Naive thymus-derived CD4-positive, alpha-beta T cell (primary cell): ENCODE measurements at regions of chr11 and their contacts with region 1.

Region 1: GRCh38 chr11:14300661-14301304 is 58.2 kb downstream of the RRAS2 start:
- DNase-seq: peak in 7 of 9 donors; percentile 19 to 47 (median 26)
- ATAC-seq: peak; percentile 88
- H3K4me3 ChIP-seq: no peak overlapping the region
- H3K4me3 Mint-ChIP-seq: no peak overlapping the region
- H3K27ac ChIP-seq: no peak overlapping the region
- H3K27ac Mint-ChIP-seq: no peak overlapping the region
- H3K4me1 ChIP-seq: no peaks in the 10 kb centered on the region
- H3K4me1 Mint-ChIP-seq: peaks cover 0 to 35% (median 0%) of the 10 kb centered on the region in 7 donors
- H3K27me3 ChIP-seq: no peaks in the 10 kb centered on the region
- H3K27me3 Mint-ChIP-seq: no peaks in the 10 kb centered on the region

Region 2: GRCh38 chr11:14418803-14419417 is 118.1 kb after region 1 on chr11:
- CTCF ChIA-PET with region 1: interaction called, 3 read pairs
- POLR2A ChIA-PET with region 1: no interaction called
- intact Hi-C with region 1: loop called in 1 of 2 experiments (anchors 1 kb)
- DNase-seq: no peak
- ATAC-seq: no peak
- H3K4me3 ChIP-seq: no peak overlapping the region
- H3K4me3 Mint-ChIP-seq: no peak overlapping the region
- H3K27ac ChIP-seq: no peak overlapping the region
- H3K27ac Mint-ChIP-seq: no peak overlapping the region
- H3K4me1 ChIP-seq: peaks cover 12 to 23% of the 10 kb centered on the region in 2 donors
- H3K4me1 Mint-ChIP-seq: peaks cover 12 to 32% (median 19%) of the 10 kb centered on the region in 7 donors
- H3K27me3 ChIP-seq: no peaks in the 10 kb centered on the region
- H3K27me3 Mint-ChIP-seq: no peaks in the 10 kb centered on the region

Region 3: DNA sequence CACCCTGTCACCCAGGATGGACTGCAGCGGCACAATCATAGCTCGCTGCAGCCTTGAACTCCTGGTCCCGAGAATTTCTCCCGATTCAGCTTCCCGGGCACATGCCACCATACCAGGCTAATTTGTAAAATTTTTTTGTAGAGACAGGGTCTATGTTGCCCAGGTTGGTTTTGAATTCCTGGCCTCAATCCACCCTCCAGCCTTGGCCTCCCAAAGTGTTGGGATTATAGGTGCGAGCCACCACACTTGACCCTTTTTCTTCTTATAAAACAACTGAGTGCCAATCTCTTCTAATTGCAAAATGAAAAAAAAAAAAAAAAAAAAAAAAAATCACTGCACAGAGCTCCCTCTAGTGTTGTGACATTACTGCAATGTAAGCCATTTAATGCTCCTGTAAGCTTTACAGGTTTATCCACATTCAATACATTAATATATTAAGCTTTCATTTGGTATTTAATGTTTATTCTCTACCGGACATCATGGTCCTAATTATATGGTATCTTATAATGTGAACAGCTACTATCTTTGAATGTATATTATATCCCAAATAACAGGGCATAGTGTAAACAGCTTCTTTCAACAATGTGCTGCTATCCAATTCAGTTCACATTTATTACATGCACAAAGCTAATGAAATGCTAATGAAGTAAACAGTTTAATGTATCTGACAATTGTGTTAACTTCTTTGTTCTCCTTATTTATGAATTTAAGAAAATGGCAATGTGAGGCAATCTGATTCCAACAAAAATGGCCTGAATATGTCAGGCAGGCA is 154.3 kb after region 1 on chr11:
- CTCF ChIA-PET with region 1: interaction called, 52 read pairs
- POLR2A ChIA-PET with region 1: no interaction called
- intact Hi-C with region 1: loop called (anchors 1 kb)
- DNase-seq: peak in 5 of 9 donors; percentile 4 to 22 (median 12)
- ATAC-seq: peak; percentile 67
- H3K4me3 ChIP-seq: no peak overlapping the region
- H3K4me3 Mint-ChIP-seq: no peak overlapping the region
- H3K27ac ChIP-seq: no peak overlapping the region
- H3K27ac Mint-ChIP-seq: peak overlapping the region in 4 of 9 donors; percentile 1 to 52 (median 46)
- H3K4me1 ChIP-seq: peaks cover 0 to 3% of the 10 kb centered on the region in 2 donors
- H3K4me1 Mint-ChIP-seq: peaks cover 0 to 10% (median 0%) of the 10 kb centered on the region in 7 donors
- H3K27me3 ChIP-seq: no peaks in the 10 kb centered on the region
- H3K27me3 Mint-ChIP-seq: no peaks in the 10 kb centered on the region